OCI-LY7 (cell line): ENCODE measurements at regions of chr4 and their contacts with region 1.

Region 1: GRCh38 chr4:4488405-4489404 is 53.1 kb downstream of the STX18 start:
- DNase-seq: peak; percentile 85
- H3K4me3 ChIP-seq: no peak overlapping the region
- H3K27ac ChIP-seq: no peak overlapping the region
- H3K4me1 ChIP-seq: peaks cover 43% of the 10 kb centered on the region
- CTCF ChIP-seq: peak; percentile 99

Region 2: DNA sequence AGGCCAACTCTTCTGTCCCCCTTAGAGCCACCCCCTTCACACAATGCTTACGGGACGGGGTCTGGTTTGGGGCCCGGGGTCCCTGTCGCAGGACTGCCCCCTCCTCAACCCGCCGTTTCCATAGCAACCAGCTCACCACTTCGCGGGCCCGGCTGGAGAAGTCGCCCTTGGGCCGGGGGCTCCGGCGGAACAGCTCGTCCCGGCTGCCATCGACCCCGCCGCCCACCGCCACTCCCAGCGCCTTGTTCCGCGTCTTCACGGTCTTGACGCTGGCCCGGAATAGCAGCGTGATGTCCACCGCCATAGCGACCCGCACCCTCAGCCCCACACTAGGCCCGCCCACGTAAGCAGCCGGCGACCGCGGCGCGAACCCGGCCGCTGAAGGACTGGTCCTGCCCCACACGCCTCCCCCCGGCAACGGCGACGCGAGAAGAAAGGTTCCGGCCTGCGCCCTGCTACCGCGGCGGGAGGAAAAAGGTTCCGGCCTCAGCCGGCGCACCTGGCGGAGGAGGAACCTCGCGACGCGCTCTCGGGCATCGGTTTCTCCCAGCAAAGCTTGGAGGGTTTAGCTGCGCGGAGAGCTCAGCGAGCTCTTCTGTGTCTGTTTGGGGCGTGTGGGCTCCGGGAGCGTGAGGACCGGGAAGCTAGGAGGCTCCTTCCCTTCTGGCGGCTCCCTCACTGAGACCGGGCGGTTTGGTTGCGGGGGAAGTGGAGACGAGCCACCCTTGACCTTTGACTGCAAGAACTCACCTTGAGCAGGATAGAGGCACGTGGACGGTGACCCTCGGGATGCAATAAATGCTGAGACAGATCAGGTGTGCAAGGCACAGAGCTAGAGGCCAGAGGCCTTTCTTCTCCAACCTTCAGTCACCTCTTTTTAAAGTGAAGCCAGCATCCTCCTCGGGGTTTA is 53.2 kb after region 1 on chr4 and contains the start of gene STX18:
- CTCF ChIA-PET with region 1: no interaction called
- POLR2A ChIA-PET with region 1: interaction called, 3 read pairs
- intact Hi-C with region 1: loop called (anchors 5 kb)
- DNase-seq: peak; percentile 90
- H3K4me3 ChIP-seq: peak within 1 kb of the TSS; percentile 86
- H3K27ac ChIP-seq: peak within 1 kb of the TSS; percentile 65
- H3K4me1 ChIP-seq: peaks cover 33% of the 10 kb centered on the region
- CTCF ChIP-seq: no peak
- total RNA-seq, gene STX18: 27.5 and 30.6 TPM in 2 replicates

Region 3: DNA sequence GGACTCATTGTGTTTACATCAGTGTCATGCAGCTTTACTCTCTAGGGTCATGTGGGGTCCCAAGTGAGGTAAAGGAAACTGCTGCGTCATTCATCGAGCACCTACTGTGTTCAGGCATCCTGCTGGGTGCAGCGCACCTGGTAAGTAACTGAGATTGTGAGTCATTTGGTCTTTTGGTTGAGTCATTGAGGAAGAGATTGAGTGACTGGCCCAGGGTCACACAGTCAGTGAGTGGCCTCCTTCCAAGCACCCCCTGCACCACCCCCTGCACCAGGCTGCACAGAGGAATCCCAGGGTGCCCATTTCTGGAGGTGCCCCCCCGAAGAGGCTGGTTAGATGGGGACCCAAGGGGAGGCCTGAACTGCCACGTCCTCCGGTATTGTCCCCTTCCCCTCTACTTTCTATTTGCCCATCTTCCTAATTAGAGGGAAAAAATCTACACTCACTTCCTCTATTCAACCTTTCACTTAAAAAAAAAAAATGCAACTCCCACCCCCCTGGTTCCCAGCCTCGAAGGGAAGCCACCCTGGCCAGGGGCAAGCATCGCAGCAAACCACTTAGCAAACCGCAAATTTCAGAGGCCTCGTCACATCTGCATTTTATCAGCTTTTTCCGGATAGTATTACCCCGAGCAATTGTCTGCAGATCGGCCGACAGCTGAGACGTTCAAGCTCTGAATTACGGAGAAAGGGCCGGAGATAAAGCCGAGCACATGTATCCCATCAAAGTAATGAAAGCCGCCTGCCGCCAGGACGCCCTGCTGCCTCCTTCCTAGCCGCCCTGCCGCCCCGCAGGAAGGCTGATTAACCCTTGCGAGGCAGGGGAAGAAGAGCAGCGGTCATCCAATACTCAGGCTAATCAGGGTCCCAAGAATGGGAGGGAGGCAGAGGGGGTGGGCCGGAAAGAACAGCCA is 274.5 kb after region 1 on chr4:
- CTCF ChIA-PET with region 1: no interaction called
- POLR2A ChIA-PET with region 1: no interaction called
- intact Hi-C with region 1: loop called (anchors 10 kb)
- DNase-seq: no peak
- H3K4me3 ChIP-seq: no peak overlapping the region
- H3K27ac ChIP-seq: no peak overlapping the region
- H3K4me1 ChIP-seq: no peaks in the 10 kb centered on the region
- CTCF ChIP-seq: no peak

Region 4: DNA sequence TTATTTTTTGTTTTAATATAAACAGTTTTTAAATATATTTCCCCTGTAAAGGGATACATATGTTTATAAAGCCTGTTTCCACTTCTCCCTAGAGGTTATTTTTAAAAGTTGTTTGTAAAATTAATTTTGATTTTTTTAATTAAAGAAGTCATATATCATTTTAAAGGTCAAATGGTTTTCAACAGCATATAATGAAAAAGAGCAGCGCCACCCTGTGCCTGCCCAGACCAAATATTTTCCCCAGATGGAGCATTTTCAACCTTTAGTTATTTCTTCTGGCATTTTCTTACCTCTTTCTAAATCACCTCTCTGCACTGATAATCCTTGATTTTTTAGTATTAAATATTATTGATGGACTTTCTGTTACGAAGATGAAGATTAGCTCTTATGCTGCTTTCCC is 391.8 kb after region 1 on chr4:
- CTCF ChIA-PET with region 1: no interaction called
- POLR2A ChIA-PET with region 1: interaction called, 3 read pairs
- intact Hi-C with region 1: loop called (anchors 2 kb)
- DNase-seq: peak; percentile 9
- H3K4me3 ChIP-seq: no peak overlapping the region
- H3K27ac ChIP-seq: no peak overlapping the region
- H3K4me1 ChIP-seq: no peaks in the 10 kb centered on the region
- CTCF ChIP-seq: peak; percentile 79

Region 5: GRCh38 chr4:4995103-4995907 is 506.6 kb after region 1 on chr4:
- CTCF ChIA-PET with region 1: no interaction called
- POLR2A ChIA-PET with region 1: no interaction called
- intact Hi-C with region 1: loop called (anchors 5 kb)
- DNase-seq: peak; percentile 74
- H3K4me3 ChIP-seq: no peak overlapping the region
- H3K27ac ChIP-seq: no peak overlapping the region
- H3K4me1 ChIP-seq: no peaks in the 10 kb centered on the region
- CTCF ChIP-seq: peak; percentile 89